ENCODE measurements at regions of chr12 and their contacts with region 1.

Region 1: GRCh38 chr12:108664338-108665258 is 30.9 kb upstream of the SELPLG start:
- DNase-seq: peak; percentile 89

Region 2: DNA sequence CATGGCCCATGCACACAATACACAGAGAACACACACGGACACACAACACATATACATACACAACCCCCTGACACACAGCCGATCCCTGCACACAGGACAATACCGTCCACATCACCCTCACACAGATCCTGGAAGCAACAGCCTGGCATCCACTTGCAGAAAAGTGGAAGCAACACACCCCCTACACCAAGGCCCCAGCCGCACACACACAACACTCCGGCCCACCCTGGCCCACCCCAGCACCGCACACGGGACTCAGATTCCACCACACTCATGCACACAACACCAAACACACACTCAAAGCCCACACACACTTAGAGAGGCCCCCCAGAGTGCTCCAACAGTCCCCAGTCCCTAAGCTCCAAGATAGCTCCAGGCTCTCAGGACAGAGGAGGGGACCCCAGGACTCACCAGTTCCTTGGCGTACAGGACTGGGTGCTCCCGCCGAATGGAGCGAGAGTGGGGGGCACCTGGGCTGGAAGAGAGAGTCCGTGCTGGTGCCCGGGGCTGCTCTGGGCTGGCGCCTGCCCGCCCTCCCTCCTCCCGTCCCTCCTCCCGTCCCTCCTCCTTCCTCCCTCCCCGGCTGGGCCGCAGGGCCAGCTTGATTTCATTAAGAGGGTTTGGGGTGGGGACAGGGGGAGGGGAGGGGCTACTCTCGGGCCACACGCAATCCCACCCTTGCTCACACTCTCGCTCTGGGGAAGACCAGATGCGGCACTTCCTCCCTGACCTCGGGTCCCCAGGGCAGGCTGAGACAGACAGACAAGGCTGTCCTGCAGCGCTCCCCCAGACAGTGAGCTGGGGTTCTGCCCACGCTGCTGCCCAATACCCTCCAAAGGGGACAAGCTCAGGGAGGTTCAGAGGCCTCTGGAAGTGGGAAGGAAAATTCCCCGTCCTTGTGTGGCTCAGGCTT is 66.8 kb before region 1 on chr12 and contains the start of gene TMEM119:
- intact Hi-C with region 1: no loop called
- DNase-seq: no peak
- total RNA-seq, gene TMEM119: 12.7 to 72.5 TPM

Region 3: DNA sequence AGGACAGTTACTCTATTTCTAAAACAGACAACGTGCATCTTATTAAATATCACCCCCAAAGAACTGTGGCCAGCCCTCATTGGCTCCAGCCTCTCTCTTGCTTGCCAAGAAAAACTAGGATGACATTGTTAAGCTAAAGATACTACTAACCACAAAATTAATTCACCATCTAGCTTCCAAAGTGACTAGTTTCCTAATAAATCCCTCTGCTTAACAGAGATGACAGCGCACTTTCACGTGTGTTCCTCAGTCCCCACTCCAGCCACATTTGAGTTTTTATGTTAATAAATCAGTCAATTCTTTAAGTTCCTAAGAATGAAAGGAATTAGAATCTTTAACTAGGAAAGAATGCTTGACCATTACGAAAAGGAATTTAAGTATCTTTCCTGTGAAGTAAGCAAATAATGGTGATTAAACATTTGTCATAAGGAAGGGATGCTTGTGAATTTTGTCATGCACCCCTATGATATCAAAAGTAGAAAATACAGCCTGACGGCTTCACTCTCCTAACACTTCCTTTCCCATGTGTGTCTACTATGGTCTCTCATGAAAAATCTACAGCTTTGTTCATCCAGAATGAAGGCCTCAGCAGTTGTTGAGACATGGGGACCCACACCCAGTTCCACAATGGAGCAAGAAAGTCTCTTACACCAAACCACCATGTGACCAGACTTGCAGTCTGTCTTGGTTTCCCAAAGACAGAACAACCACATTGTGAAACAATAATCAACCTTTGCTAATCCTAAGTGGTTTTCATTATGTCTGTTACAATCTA is 58.6 kb after region 1 on chr12:
- intact Hi-C with region 1: loop called in 1 of 2 experiments (anchors 2 kb)
- DNase-seq: no peak

Region 4: DNA sequence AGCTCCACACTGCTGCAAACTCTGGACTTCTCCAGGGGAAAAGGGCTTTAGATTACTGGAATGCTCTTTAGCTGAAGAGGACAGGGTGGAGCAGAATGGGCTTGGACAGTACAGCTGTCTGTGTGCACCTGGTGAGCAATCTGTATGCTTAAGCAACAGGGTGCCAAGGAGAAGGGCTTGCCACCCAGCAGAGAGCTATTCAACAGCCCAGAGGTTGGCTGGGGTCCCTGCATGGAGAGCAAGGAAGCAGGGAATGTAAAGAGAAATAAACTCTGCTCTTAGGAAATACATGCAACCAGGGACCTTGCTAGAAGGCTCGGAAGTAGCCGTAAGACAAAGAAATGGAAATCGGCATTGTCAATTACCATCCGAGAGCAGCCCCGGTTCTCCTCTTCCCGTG is 119.7 kb after region 1 on chr12:
- intact Hi-C with region 1: loop called in 1 of 2 experiments (anchors 5 kb)
- DNase-seq: no peak

Region 5: GRCh38 chr12:108838194-108839017 is 173.8 kb after region 1 on chr12:
- intact Hi-C with region 1: no loop called
- DNase-seq: peak; percentile 96

Region 6: GRCh38 chr12:108856428-108857157 is 192.0 kb after region 1 on chr12:
- intact Hi-C with region 1: loop called in 1 of 2 experiments (anchors 5 kb)
- DNase-seq: peak; percentile 93

Region 7: DNA sequence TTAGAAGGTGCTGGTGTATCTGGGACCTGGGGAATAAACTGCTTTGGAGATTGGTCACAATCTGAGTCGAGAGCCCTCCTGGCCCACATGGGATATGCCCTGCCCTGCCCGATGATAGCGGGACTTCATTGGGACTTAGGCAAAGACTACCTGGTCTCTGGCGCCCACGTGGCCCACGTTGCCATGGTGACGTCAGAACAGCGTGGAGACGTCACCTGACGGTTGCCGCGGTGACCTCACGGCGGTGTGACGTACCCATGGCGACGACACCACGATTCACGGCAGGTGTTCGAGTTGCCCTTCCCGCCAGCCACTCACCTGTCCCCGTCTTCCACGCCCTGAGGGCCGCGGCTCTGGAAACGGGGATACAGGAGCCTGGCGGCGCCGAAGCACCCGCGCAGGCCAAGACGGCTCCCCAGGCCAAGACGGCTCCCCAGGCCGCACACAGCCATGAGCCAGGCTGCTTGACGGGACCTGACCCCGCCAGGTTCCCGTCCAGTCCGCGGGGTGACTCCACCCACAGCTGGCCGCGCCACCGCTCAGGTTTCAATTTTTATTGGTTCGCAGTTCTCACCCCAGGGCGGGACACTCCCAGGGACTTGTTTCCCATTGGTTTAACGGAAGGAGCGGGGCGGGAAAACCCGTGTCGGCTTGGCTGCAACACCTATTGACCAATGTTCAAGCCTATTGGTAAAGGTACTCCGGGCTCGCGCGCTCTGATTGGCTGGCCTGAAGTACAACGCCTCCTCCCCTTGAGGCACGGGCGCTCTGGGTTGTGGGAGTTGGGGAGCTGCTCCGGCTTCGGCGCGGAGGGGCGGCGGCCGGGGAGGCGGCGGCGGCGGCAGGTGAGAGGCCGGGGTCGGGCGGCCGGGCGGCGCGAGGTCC is 908.7 kb after region 1 on chr12 and contains the starts of genes MMAB and MVK:
- intact Hi-C with region 1: no loop called
- DNase-seq: peak; percentile 99
- total RNA-seq, gene MMAB: 17.9 to 20.0 TPM
- total RNA-seq, gene MVK: 9.1 TPM